GM10248 (cell line): ENCODE measurements at regions of chr1 and their contacts with region 1.

Region 1: DNA sequence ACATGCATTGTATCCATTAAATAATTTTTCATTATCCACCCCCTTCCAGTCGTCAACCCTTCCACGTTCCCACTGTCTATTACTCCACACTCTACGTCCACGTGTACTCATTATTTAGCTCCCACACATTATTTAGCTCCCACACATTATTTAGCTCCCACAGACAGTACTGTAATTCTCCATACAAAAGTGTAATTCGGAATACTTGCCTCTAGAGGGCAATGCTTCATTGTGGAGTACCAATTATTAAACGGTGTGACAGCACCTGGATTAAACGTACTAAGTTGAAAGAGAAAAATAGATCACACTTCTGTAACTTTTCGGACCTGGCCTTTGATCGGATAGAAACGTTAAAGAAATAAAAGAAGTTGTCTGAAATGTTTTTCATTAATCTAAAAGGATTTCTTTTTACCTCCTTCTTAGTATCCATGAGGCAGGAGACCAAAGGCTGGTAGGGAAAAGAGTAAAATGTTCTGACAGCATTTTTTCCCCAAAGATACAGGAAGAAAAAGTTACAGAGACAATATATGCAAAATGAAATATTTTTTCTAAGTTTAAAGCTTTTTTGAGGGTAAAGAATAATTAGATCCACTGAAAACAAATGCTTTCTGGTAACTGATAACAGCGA is 99.2 kb downstream of the LHX8 start:
- DNase-seq: peak; percentile 13
- CTCF ChIP-seq: peak; percentile 63

Region 2: DNA sequence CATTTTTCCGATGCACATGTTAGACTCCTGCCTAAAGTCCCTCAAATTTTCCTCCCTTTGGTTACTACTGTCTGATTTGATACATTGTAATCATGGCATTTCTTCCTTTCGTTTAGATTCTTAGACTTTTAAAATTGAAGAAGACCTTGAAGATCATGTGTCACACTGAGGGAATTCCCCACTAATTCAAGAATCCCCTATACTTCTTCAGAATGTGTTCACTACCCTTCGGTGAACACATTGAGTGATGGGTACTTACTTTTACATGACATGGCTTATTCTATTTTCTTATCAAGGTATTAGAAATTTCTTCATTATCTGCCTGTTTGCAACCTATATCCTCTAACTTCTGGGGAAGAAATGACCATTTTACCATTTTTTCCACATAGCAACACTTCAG is 13.3 kb before region 1 on chr1:
- CTCF ChIA-PET with region 1: interaction called, 25 read pairs
- POLR2A ChIA-PET with region 1: no interaction called
- DNase-seq: no peak
- CTCF ChIP-seq: no peak

Region 3: DNA sequence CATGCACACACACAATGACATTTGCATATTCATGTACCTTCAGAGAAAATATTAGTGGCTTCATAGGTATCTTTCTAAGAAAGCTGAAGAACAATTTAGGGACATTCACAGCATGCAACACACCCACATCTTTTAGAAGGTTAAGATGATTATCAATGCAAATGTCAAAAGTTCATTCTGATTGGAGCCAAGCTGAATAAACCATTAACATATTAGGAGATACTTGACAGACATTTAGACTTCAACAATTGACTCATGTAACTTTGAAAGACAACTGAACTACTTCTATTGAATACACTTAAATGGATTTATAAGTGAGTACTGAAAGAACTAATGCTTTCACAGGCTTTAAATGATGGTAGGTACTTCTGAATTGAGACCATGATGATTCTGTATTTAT is 11.8 kb after region 1 on chr1:
- CTCF ChIA-PET with region 1: interaction called, 22 read pairs
- POLR2A ChIA-PET with region 1: no interaction called
- DNase-seq: no peak
- CTCF ChIP-seq: no peak

Region 4: GRCh38 chr1:75632350-75632949 is 399.0 kb after region 1 on chr1:
- CTCF ChIA-PET with region 1: interaction called, 18 read pairs
- POLR2A ChIA-PET with region 1: no interaction called
- DNase-seq: peak; percentile 15
- CTCF ChIP-seq: peak; percentile 73